ENCODE measurements at regions of chr1 and their contacts with region 1.

Region 1: DNA sequence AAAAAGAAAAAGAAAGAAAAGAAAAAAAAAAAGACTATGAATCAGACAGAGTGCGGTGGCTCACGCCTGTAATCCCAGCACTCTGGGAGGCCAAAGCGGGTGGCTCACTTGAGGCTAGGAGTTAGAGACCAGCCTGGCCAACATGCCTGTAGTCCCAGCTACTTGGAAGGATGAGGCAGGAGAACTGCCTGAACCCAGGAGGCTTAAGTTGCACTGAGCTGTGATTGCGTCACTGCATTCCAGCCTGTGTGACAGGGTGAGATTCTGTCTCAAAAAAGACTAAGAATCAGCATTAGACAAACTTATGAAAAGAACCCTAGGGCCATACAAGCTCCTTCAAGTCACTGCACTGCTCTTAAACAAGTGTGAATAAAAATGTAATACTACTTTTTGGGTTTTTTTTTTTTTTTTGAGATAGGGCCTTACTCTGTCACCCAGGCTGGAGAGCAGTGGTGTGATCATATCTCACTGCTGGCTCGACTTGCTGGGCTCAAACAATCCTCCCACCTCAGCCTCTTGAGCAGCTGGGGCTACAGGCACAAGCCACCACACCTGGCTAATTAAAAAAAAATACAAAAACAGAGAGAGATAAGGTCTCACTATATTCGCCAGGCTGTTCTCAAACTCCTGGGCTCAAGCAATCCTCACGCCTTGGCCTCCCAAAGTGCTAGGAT is 17.0 kb downstream of the PSMB4 start:
- DNase-seq: peak; percentile 41
- ATAC-seq: no peak
- H3K4me3 ChIP-seq: no peak overlapping the region
- H3K27ac ChIP-seq: no peak overlapping the region
- H3K4me1 ChIP-seq: no peaks in the 10 kb centered on the region
- H3K27me3 ChIP-seq: no peaks in the 10 kb centered on the region
- CTCF ChIP-seq: no peak

Region 2: DNA sequence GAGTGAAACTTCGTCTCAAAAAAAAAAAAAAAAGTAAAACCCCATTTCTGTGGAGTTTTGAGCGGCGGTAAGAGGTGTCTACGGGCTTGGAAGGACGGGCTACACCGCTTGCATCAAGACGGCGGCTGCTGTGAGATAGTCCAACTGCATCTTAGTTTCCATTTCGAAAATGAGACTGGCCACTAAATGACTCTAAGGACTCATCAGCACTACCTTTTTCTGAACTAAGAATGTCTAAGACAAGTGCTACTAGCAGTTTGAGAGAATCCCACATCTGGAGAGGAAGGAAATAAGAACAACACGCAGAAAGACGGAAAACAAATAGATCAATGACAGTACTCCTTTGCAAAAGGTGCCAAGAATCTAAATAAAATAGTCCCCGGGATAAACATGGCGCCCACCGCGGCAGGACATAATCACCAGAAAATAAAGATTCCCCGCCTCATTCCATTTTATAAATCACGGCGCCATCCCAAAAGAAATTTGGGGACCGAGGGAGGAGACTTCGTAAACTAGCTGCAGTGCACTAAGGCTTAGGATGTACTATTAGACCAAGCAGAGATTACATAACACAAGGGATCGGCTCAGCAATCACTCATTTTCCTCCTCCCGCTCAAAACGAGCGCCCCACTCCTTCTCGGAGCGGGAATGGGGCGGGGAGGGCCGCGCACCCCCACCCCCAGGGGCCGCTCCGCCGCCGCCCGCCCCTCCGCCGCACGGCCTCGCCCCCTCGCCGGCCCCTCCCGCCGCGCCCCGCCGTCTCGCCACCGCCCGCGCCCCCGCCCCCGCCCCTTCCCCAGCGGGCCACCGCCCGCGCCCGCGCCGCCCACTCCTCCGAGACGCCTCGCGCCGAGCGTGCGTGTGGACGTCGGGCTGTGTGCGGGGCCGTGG is 41.8 kb after region 1 on chr1:
- CTCF ChIA-PET with region 1: no interaction called
- POLR2A ChIA-PET with region 1: no interaction called
- intact Hi-C with region 1: no loop called
- DNase-seq: peak; percentile 80
- ATAC-seq: peak; percentile 61
- H3K4me3 ChIP-seq: peak overlapping the region; percentile 100
- H3K27ac ChIP-seq: peak overlapping the region; percentile 79
- H3K4me1 ChIP-seq: peaks cover 12% of the 10 kb centered on the region
- H3K27me3 ChIP-seq: no peaks in the 10 kb centered on the region
- CTCF ChIP-seq: no peak

Region 3: DNA sequence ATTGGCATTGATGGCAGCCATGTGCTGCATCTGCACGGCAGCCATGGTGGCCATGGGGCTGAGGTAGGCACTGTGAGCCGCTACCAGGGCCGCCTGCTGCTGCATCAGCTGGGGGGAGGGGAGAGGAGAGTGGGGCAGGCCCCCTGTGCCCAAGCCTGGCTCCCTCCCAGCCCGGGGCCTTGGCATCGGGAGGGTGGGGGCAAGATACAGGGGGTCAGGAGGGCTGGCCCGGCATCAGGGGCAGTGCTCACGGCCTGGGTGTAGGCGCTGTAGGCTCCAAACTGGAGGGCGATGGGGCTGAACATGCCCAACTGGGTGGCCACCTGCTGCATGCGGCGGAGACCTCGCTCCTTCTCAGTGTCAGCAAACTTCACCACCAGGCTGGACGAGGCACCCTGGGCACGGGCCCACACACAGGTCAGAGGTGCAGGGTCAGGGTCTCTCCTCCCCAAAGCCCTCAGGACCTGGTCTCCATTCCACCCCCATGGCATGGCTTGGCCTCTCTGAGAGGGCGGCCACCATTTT is 291.2 kb after region 1 on chr1:
- CTCF ChIA-PET with region 1: no interaction called
- POLR2A ChIA-PET with region 1: interaction called, 10 read pairs
- intact Hi-C with region 1: no loop called
- DNase-seq: no peak
- ATAC-seq: no peak
- H3K4me3 ChIP-seq: no peak overlapping the region
- H3K27ac ChIP-seq: no peak overlapping the region
- H3K4me1 ChIP-seq: no peaks in the 10 kb centered on the region
- H3K27me3 ChIP-seq: no peaks in the 10 kb centered on the region
- CTCF ChIP-seq: no peak

Measured in PC-3 (cell line).